ENCODE measurements at regions of chr9 and their contacts with region 1.

Region 1: DNA sequence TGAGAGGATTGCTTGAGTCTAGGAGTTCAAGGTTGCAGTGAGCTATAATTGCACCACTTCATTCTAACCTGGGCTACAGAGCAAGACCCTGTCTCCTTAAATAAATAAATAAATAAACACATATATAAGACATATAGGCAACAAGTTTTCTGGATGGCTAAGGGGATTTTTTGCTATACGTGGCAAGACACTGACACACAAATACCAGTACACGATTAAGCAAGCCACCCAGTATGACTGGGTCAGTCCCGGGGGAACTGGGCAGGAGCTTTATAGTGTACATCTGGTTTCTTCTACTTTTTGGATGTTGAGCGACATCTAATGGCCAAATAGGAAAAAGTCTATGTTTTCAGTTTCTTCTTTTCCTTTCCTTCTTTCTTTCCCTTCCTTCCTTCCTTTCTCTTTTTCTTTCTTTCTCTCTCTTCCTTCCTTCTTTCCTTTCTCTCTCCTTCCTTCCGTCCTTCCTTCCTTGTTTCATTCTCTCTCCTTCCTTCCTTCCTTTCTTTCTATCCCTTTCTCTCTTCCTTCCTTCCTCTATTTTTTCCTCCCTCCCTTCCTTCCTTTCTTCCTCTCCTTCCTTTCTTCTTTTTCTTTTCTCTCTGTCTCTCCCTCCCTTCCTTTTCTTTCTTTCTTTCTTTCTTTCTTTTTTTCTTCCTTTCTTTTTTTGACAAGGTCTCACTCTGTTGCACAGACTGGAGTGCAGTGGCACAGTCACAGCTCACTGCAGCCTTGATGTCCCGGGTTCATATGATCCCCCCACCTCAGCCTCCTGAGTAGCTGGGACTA is 47.0 kb upstream of the PLIN2 start:
- DNase-seq: peak; percentile 75
- ATAC-seq: peak; percentile 98
- H3K4me3 Mint-ChIP-seq: peak overlapping the region; percentile 5
- H3K27ac Mint-ChIP-seq: peak overlapping the region; percentile 40
- H3K4me1 Mint-ChIP-seq: peaks cover 29% of the 10 kb centered on the region
- H3K27me3 Mint-ChIP-seq: no peaks in the 10 kb centered on the region

Region 2: DNA sequence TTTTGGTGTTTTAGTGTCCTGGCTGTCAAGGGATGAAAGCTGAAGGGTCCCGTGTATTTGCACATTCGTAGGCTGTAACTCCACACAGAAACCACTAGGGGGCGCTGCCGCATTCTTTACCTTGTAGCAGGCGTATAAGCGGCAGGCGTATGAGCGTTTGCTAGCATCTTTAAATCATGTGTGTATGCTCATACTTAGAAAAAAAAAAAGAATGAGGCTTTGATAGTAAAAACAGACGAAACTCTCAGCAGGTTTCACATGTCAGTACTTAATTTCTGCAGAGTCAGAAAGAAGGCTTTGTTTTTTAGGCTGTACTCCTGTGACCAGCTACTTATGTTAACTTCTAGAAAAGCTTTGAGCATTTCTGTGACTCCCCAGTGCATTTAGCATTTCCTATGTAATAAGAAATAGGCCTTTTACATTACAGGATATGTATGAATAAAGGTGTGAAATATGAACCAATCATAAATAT is 919.1 kb before region 1 on chr9:
- CTCF ChIA-PET with region 1: no interaction called
- POLR2A ChIA-PET with region 1: no interaction called
- intact Hi-C with region 1: loop called (anchors 5 kb)
- DNase-seq: peak; percentile 87
- ATAC-seq: peak; percentile 77
- H3K4me3 Mint-ChIP-seq: no peak overlapping the region
- H3K27ac Mint-ChIP-seq: no peak overlapping the region
- H3K4me1 Mint-ChIP-seq: peaks cover 1% of the 10 kb centered on the region
- H3K27me3 Mint-ChIP-seq: peaks cover 18% of the 10 kb centered on the region

Region 3: GRCh38 chr9:19085295-19085694 is 89.0 kb before region 1 on chr9:
- CTCF ChIA-PET with region 1: interaction called, 49 read pairs
- POLR2A ChIA-PET with region 1: no interaction called
- intact Hi-C with region 1: loop called (anchors 1 kb)
- DNase-seq: no peak
- ATAC-seq: peak; percentile 61
- H3K4me3 Mint-ChIP-seq: no peak overlapping the region
- H3K27ac Mint-ChIP-seq: no peak overlapping the region
- H3K4me1 Mint-ChIP-seq: no peaks in the 10 kb centered on the region
- H3K27me3 Mint-ChIP-seq: no peaks in the 10 kb centered on the region

Region 4: GRCh38 chr9:19127881-19128500 is 46.3 kb before region 1 on chr9:
- CTCF ChIA-PET with region 1: interaction called, 13 read pairs
- POLR2A ChIA-PET with region 1: no interaction called
- intact Hi-C with region 1: loop called in 1 of 2 experiments (anchors 1 kb)
- DNase-seq: peak; percentile 54
- ATAC-seq: peak; percentile 14
- H3K4me3 Mint-ChIP-seq: peak overlapping the region; percentile 92
- H3K27ac Mint-ChIP-seq: peak overlapping the region; percentile 88
- H3K4me1 Mint-ChIP-seq: peaks cover 58% of the 10 kb centered on the region
- H3K27me3 Mint-ChIP-seq: no peaks in the 10 kb centered on the region

Region 5: GRCh38 chr9:19161257-19162025 is 12.9 kb before region 1 on chr9:
- CTCF ChIA-PET with region 1: interaction called, 16 read pairs
- POLR2A ChIA-PET with region 1: interaction called, 3 read pairs
- intact Hi-C with region 1: no loop called
- DNase-seq: peak; percentile 78
- ATAC-seq: peak; percentile 98
- H3K4me3 Mint-ChIP-seq: peak overlapping the region; percentile 46
- H3K27ac Mint-ChIP-seq: peak overlapping the region; percentile 76
- H3K4me1 Mint-ChIP-seq: peaks cover 25% of the 10 kb centered on the region
- H3K27me3 Mint-ChIP-seq: no peaks in the 10 kb centered on the region

Region 6: DNA sequence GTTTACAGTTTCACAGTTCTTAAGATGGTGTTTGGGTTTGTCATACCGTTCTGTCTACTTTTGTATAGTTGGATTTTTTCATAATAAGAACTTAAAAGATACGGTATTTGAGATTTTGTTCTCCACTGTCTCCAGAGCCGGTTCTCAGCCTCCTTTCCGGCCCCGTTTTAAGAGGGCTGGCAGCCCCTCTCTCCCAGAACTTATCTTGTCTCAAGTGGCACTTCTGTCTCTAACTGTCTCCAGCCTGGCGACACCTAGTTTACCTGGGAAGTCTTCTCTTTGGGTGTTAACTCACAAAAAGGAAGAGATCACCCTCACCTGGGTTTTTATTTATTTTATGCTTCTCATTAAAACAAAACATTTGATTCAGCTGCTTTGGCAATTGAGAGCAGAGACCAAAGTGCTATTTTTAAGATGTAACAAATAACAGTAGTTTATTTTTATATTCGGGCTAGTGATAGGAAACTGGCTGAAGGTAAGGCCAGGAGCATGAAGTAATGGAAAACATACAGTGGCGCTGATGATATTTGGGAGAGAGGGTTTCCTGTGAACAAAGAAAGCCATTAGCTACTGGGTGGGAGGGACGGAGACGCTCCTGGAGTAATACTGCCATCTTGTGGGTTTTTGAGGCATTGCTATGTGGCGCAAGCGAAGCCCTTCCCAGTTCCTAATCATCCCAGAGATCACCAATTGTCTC is 282.8 kb after region 1 on chr9:
- CTCF ChIA-PET with region 1: interaction called, 13 read pairs
- POLR2A ChIA-PET with region 1: no interaction called
- intact Hi-C with region 1: loop called in 1 of 2 experiments (anchors 1 kb)
- DNase-seq: peak; percentile 76
- ATAC-seq: peak; percentile 92
- H3K4me3 Mint-ChIP-seq: no peak overlapping the region
- H3K27ac Mint-ChIP-seq: no peak overlapping the region
- H3K4me1 Mint-ChIP-seq: peaks cover 9% of the 10 kb centered on the region
- H3K27me3 Mint-ChIP-seq: no peaks in the 10 kb centered on the region